Posterior cingulate gyrus (tissue), 11 donors: ENCODE measurements at regions of chr1 and their contacts with region 1.

Region 1: GRCh38 chr1:226634166-226634588 is 85.6 kb downstream of the STUM start:
- DNase-seq: peak; percentile 67 to 97 (median 88)

Region 2: DNA sequence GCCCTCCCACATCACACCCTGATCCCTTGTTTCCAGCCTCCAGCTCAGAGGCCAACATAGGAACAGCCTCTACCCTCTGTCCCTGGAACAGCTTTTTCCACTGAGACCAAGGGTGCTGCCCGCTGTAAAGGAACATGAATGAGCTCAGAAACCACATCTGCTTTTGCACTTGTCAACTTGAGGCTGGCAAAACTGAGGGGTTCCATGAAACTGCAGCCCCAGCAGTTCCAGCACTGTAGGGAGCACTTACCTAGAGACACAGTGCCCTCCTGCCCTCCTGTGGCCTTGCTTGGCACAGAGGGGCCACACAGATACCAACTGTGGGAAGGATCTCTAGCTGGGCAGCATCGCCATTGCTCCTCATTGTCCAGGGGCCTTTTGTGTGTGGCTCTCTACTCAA is 53.2 kb after region 1 on chr1:
- intact Hi-C with region 1: loop called (anchors 1 kb)
- DNase-seq: peak in 2 of 10 donors; percentile 49 to 87